CD4-positive, alpha-beta T cell (primary cell): ENCODE measurements at regions of chr15 and their contacts with region 1.

Region 1: GRCh38 chr15:55267401-55268175 is 22.0 kb downstream of the RAB27A start:
- DNase-seq: peak; percentile 51 to 92 (median 66)
- ATAC-seq: peak; percentile 90
- H3K4me3 ChIP-seq: peak overlapping the region; percentile 45
- H3K4me3 Mint-ChIP-seq: peak overlapping the region; percentile 70
- H3K27ac ChIP-seq: peak overlapping the region; percentile 52 to 82
- H3K27ac Mint-ChIP-seq: peak overlapping the region; percentile 89
- H3K4me1 ChIP-seq: peaks cover 42% of the 10 kb centered on the region
- H3K4me1 Mint-ChIP-seq: peaks cover 60% of the 10 kb centered on the region
- H3K27me3 ChIP-seq: no peaks in the 10 kb centered on the region
- H3K27me3 Mint-ChIP-seq: no peaks in the 10 kb centered on the region
- CTCF ChIP-seq: no peak

Region 2: DNA sequence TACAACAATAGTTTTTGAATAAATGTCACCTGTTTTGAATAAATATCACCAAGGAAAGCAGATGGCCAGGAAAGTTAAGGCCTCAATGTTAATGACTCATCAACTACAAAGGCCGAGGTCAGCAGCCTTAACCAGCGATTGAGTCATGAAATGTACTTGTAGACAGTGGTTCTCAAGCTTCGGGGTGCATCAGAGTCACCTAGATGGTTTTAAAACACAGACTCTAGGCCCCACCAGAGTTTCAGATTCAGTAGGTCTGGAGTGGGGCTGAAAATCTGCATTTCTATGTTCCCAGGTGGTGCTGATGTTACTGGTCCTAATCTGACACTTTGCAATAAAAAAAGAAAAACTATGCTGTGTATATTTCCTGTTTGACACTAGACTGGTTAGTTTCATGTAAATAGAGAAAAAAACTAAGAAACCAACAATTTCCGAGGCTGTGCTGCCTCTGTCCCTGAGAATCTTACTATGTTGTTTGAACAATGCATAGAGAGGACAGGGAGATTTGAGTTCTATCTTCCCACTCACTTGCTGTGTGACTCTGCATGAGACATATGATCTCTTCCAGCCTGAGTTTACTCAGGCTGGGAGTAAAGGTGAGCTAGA is 12.3 kb after region 1 on chr15:
- CTCF ChIA-PET with region 1: interaction called, 5 read pairs
- POLR2A ChIA-PET with region 1: interaction called, 37 read pairs
- intact Hi-C with region 1: no loop called
- DNase-seq: peak in 12 of 14 experiments; percentile 23 to 85 (median 44)
- ATAC-seq: peak; percentile 65
- H3K4me3 ChIP-seq: no peak overlapping the region
- H3K4me3 Mint-ChIP-seq: peak overlapping the region; percentile 47
- H3K27ac ChIP-seq: peak overlapping the region; percentile 68 to 69
- H3K27ac Mint-ChIP-seq: peak overlapping the region; percentile 94
- H3K4me1 ChIP-seq: peaks cover 70% of the 10 kb centered on the region
- H3K4me1 Mint-ChIP-seq: peaks cover 93% of the 10 kb centered on the region
- H3K27me3 ChIP-seq: no peaks in the 10 kb centered on the region
- H3K27me3 Mint-ChIP-seq: no peaks in the 10 kb centered on the region
- CTCF ChIP-seq: no peak

Region 3: DNA sequence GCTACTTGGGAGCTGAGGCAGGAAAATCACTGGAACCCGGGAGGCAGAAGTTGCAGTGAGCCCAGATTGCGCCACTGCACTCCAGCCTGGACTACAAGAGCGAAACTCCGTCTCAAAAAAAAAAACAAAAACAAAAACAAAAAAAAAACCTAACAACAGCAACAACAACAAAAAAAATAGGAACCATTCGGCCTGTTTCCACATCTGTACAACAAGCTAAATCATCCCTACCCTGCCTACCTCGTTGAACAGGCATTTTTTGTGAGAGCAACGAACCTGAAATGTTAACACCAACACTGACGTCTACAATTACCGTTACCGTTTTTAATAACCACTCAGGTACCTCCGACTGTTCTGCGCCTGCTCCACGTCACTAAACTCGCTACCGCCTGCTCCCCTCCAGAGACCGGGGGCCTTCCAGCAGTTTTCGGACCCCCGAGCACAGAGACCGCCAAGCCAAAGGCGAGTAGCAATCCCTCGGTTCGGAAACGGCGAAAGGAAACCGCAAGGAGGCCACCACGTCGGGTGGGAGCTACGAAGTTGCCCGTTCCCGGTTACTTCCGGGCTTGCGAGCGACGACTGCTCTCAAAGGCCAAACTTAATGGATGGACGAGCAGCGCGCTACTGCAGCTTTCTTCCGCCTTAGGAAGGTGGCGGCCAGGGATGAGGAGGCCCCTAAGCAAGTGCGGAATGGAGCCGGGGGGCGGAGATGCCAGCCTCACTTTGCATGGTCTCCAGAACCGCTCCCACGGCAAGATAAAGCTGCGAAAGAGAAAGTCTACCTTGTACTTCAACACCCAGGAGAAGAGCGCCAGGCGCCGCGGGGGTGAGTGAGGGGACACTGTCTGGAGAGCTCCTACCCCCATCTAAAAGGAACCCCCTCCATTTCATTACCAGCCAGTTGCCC is 51.3 kb after region 1 on chr15 and contains the starts of genes PIGB and PIGBOS1:
- CTCF ChIA-PET with region 1: no interaction called
- POLR2A ChIA-PET with region 1: interaction called, 16 read pairs
- intact Hi-C with region 1: no loop called
- DNase-seq: peak; percentile 62 to 90 (median 70)
- ATAC-seq: peak; percentile 90
- H3K4me3 ChIP-seq: peak within 1 kb of the TSS; percentile 69
- H3K4me3 Mint-ChIP-seq: peak within 1 kb of the TSS; percentile 99
- H3K27ac ChIP-seq: peak within 1 kb of the TSS; percentile 88 to 93
- H3K27ac Mint-ChIP-seq: peak within 1 kb of the TSS; percentile 100
- H3K4me1 ChIP-seq: peaks cover 33% of the 10 kb centered on the region
- H3K4me1 Mint-ChIP-seq: peaks cover 80% of the 10 kb centered on the region
- H3K27me3 ChIP-seq: no peaks in the 10 kb centered on the region
- H3K27me3 Mint-ChIP-seq: no peaks in the 10 kb centered on the region
- CTCF ChIP-seq: no peak
- total RNA-seq, gene PIGB: 21.5 to 21.6 TPM
- total RNA-seq, gene PIGBOS1: 6.2 to 10.1 TPM

Region 4: DNA sequence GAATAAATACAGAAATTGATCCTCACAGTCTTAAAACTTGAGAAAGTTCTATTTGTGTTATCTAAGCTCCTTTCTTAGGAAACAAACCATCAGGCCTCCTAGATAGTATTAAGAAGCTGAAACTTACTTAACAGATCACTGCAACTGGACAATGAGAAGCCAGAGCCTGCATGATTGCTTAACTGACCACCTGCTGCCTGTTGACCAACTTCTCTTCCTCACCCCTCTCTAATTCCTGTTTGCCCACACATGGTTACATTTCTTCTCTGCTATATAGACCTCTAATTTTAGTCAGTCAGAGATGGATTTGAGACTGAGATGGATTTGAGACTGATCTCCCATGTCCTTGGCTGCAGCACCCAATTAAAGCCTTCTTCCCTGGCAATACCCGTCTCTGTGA is 127.1 kb after region 1 on chr15:
- CTCF ChIA-PET with region 1: no interaction called
- POLR2A ChIA-PET with region 1: no interaction called
- intact Hi-C with region 1: no loop called
- DNase-seq: peak in 1 of 14 experiments; percentile 7
- ATAC-seq: no peak
- H3K4me3 ChIP-seq: no peak overlapping the region
- H3K4me3 Mint-ChIP-seq: no peak overlapping the region
- H3K27ac ChIP-seq: no peak overlapping the region
- H3K27ac Mint-ChIP-seq: no peak overlapping the region
- H3K4me1 ChIP-seq: no peaks in the 10 kb centered on the region
- H3K4me1 Mint-ChIP-seq: peaks cover 42% of the 10 kb centered on the region
- H3K27me3 ChIP-seq: no peaks in the 10 kb centered on the region
- H3K27me3 Mint-ChIP-seq: no peaks in the 10 kb centered on the region
- CTCF ChIP-seq: no peak